ENCODE measurements at regions of chr16 and their contacts with region 1.

Region 1: GRCh38 chr16:57899771-57900661 is 70.9 kb downstream of the CNGB1 start:
- DNase-seq: peak; percentile 84
- H3K4me3 Mint-ChIP-seq: peak overlapping the region; percentile 25
- H3K27ac Mint-ChIP-seq: no peak overlapping the region
- H3K4me1 Mint-ChIP-seq: peaks cover 4% of the 10 kb centered on the region
- H3K27me3 Mint-ChIP-seq: peaks cover 19% of the 10 kb centered on the region

Region 2: DNA sequence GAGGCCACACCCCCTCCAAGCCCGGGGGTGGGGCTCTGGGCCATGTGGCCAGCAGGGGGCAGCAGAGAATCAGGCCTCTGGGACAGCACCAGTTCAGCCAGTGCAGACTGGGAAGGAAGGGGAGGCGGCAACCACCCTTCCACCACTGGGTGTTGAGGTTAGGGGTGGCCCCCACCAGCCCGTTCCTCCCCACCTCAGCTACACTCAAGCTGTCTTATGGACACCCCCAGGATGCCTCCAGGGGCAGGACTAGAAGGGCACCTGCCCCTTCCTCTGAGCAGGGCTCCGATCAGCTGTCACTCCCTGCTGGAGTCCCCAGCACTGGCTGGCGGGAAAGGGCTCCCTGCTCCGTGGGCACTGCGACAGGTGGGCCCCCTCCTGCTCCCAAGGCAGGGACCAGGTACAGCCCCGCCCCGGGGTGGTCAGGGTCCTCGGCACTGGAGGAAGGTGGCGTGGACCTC is 142.7 kb before region 1 on chr16:
- CTCF ChIA-PET with region 1: interaction called, 13 read pairs
- POLR2A ChIA-PET with region 1: no interaction called
- intact Hi-C with region 1: no loop called
- DNase-seq: peak; percentile 93
- H3K4me3 Mint-ChIP-seq: no peak overlapping the region
- H3K27ac Mint-ChIP-seq: no peak overlapping the region
- H3K4me1 Mint-ChIP-seq: peaks cover 6% of the 10 kb centered on the region
- H3K27me3 Mint-ChIP-seq: no peaks in the 10 kb centered on the region

Region 3: GRCh38 chr16:58306327-58306726 is 406.3 kb after region 1 on chr16:
- CTCF ChIA-PET with region 1: no interaction called
- POLR2A ChIA-PET with region 1: no interaction called
- intact Hi-C with region 1: loop called (anchors 10 kb)
- DNase-seq: peak; percentile 69
- H3K4me3 Mint-ChIP-seq: no peak overlapping the region
- H3K27ac Mint-ChIP-seq: no peak overlapping the region
- H3K4me1 Mint-ChIP-seq: no peaks in the 10 kb centered on the region
- H3K27me3 Mint-ChIP-seq: peaks cover 8% of the 10 kb centered on the region

Measured in activated CD4-positive, alpha-beta memory T cell treated with anti-CD3 and anti-CD28 coated beads for 36 hours (primary cell).